PC-9 (cell line): ENCODE measurements at regions of chr3 and their contacts with region 1.

Region 1: GRCh38 chr3:5426094-5426883 is 238.8 kb downstream of the EDEM1 start:
- DNase-seq: peak; percentile 33 to 70
- H3K4me3 ChIP-seq: no peak overlapping the region
- H3K27ac ChIP-seq: no peak overlapping the region
- H3K4me1 ChIP-seq: no peaks in the 10 kb centered on the region
- H3K27me3 ChIP-seq: no peaks in the 10 kb centered on the region
- CTCF ChIP-seq: peak; percentile 74

Region 2: DNA sequence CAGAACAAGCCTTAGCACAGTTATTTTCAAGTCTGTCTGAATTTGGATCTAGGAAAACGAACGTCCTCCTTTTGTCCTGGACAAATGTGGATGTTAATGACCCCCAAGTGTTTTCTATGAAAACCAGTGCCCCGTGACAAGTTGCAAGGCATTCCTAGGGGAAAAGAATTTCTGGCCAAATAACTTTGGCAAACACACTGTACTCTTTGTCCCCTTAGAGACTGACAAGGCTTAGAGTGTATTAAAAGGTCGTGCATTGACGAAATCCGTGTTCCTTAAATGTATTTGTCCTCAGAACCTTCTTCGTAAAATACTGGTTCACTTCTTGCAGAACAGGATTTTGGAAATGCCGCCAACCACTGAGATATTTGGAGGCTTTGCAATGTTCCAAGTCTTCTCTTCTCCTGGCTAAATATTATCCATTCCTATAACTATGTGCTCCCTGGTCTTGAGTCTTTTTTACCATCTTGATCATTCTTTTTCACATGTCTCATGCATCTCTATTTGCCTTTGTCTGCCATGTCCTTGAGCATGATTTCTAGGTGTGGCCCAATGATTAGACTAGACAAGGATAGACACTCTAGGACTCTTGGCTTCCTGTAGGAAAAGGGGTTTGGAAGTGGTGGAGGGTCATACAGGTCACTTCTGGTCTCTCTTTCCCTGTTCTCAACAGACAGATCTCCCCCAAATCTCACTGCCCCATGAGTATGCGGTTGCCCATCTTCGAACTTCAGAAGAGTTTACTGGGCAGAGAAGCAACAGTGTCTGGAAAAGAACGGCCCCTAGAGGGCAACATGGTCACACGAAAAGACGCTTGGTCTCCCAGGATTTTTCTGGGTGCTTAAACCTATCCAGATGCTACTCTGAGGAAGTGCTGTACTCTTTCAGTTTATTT is 121.3 kb before region 1 on chr3:
- CTCF ChIA-PET with region 1: no interaction called
- POLR2A ChIA-PET with region 1: no interaction called
- intact Hi-C with region 1: loop called (anchors 1 kb)
- DNase-seq: peak; percentile 51 to 57
- H3K4me3 ChIP-seq: no peak overlapping the region
- H3K27ac ChIP-seq: no peak overlapping the region
- H3K4me1 ChIP-seq: no peaks in the 10 kb centered on the region
- H3K27me3 ChIP-seq: no peaks in the 10 kb centered on the region
- CTCF ChIP-seq: peak; percentile 76

Region 3: GRCh38 chr3:5376761-5377160 is 49.5 kb before region 1 on chr3:
- CTCF ChIA-PET with region 1: no interaction called
- POLR2A ChIA-PET with region 1: no interaction called
- intact Hi-C with region 1: loop called (anchors 1 kb)
- DNase-seq: peak; percentile 70 to 84
- H3K4me3 ChIP-seq: no peak overlapping the region
- H3K27ac ChIP-seq: no peak overlapping the region
- H3K4me1 ChIP-seq: 0 out of 2 replicates have a peak, but pooled peaks cover 3% of the 10 kb centered on the region
- H3K27me3 ChIP-seq: no peaks in the 10 kb centered on the region
- CTCF ChIP-seq: no peak

Region 4: GRCh38 chr3:5456199-5456598 is 29.9 kb after region 1 on chr3:
- CTCF ChIA-PET with region 1: no interaction called
- POLR2A ChIA-PET with region 1: no interaction called
- intact Hi-C with region 1: no loop called
- DNase-seq: no peak
- H3K4me3 ChIP-seq: no peak overlapping the region
- H3K27ac ChIP-seq: no peak overlapping the region
- H3K4me1 ChIP-seq: no peaks in the 10 kb centered on the region
- H3K27me3 ChIP-seq: no peaks in the 10 kb centered on the region
- CTCF ChIP-seq: no peak

Region 5: DNA sequence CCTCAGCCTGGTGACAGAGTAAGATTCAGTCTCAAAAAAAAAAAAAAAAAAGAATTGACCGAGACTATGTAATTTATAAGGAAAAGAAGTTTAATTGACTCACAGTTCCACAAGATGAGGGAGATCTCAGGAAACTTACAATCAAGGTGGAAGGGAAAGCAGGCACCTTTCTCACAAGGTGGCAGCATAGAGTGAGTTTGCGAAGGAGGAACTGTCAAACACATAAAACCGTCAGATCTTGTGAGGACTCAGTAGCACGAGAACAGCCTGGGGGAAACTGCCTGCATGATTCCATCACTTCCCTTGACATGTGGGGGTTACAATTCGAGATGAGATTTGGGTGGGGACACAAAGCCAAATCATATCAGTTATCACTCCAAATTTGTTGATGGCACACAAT is 142.2 kb after region 1 on chr3:
- CTCF ChIA-PET with region 1: no interaction called
- POLR2A ChIA-PET with region 1: no interaction called
- intact Hi-C with region 1: no loop called
- DNase-seq: no peak
- H3K4me3 ChIP-seq: no peak overlapping the region
- H3K27ac ChIP-seq: no peak overlapping the region
- H3K4me1 ChIP-seq: no peaks in the 10 kb centered on the region
- H3K27me3 ChIP-seq: no peaks in the 10 kb centered on the region
- CTCF ChIP-seq: peak; percentile 52; the same call in 1 of the 2 replicates

Region 6: GRCh38 chr3:5731094-5731493 is 304.8 kb after region 1 on chr3:
- CTCF ChIA-PET with region 1: interaction called, 10 read pairs
- POLR2A ChIA-PET with region 1: no interaction called
- intact Hi-C with region 1: no loop called
- DNase-seq: no peak
- H3K4me3 ChIP-seq: no peak overlapping the region
- H3K27ac ChIP-seq: no peak overlapping the region
- H3K4me1 ChIP-seq: no peaks in the 10 kb centered on the region
- H3K27me3 ChIP-seq: no peaks in the 10 kb centered on the region
- CTCF ChIP-seq: peak; percentile 52